B cell (primary cell): ENCODE measurements at regions of chr15 and their contacts with region 1.

Region 1: GRCh38 chr15:38389924-38390542 is 63.9 kb upstream of the FAM98B start:
- DNase-seq: peak; percentile 58
- ATAC-seq: peak; percentile 56
- H3K4me3 ChIP-seq: no peak overlapping the region
- H3K4me3 Mint-ChIP-seq: no peak overlapping the region
- H3K27ac ChIP-seq: no peak overlapping the region
- H3K27ac Mint-ChIP-seq: no peak overlapping the region
- H3K4me1 ChIP-seq: no peaks in the 10 kb centered on the region
- H3K4me1 Mint-ChIP-seq: no peaks in the 10 kb centered on the region
- H3K27me3 ChIP-seq: peaks cover 0 to 6% (median under 1%) of the 10 kb centered on the region in 4 experiments
- H3K27me3 Mint-ChIP-seq: peaks cover 23% of the 10 kb centered on the region
- CTCF ChIP-seq: peak; percentile 95

Region 2: DNA sequence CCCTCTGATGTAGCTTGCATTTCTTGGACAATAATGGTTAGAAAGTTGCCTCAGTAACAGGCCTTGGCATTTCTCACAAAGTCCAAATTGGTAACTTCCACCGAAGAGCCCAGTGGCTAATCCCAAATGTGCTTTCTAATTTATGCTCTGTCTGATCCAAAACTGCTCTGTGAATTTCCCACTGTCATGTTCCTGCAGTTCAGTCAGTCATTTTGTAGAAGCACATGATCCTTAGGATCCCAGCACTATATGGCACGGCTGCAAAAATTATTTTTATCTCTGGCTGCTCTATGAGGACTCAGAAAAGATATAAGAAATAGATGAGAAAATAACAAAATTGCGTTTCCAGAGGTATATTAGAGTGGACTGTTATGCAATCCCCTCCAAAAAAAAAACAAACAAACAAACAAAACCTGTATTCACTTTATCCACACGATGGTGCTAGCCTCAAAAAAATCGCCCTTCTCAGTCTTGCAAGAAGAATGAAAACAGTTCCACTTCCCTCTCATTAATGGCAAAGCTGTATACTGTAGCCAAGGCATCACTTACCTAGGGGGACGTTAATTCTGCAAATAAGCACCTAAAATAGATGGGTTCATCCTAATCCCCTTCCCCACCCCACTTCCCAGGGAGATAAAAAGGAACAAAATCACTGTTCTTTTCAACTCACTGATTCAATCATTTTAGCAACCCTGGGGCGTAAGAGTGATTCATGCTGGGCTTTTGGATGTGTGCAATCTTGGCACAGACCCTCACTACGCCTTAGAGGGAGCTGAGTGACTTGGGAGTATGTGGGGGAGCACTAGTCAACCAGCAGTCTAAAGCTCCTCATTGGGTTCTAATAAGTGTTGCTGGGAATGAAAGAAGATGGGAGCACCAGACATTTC is 394.3 kb before region 1 on chr15:
- CTCF ChIA-PET with region 1: interaction called, 33 read pairs
- POLR2A ChIA-PET with region 1: no interaction called
- intact Hi-C with region 1: loop called (anchors 1 kb)
- DNase-seq: peak; percentile 49
- ATAC-seq: no peak
- H3K4me3 ChIP-seq: no peak overlapping the region
- H3K4me3 Mint-ChIP-seq: no peak overlapping the region
- H3K27ac ChIP-seq: no peak overlapping the region
- H3K27ac Mint-ChIP-seq: no peak overlapping the region
- H3K4me1 ChIP-seq: no peaks in the 10 kb centered on the region
- H3K4me1 Mint-ChIP-seq: no peaks in the 10 kb centered on the region
- H3K27me3 ChIP-seq: no peaks in the 10 kb centered on the region
- H3K27me3 Mint-ChIP-seq: peaks cover 40% of the 10 kb centered on the region
- CTCF ChIP-seq: peak; percentile 65

Region 3: DNA sequence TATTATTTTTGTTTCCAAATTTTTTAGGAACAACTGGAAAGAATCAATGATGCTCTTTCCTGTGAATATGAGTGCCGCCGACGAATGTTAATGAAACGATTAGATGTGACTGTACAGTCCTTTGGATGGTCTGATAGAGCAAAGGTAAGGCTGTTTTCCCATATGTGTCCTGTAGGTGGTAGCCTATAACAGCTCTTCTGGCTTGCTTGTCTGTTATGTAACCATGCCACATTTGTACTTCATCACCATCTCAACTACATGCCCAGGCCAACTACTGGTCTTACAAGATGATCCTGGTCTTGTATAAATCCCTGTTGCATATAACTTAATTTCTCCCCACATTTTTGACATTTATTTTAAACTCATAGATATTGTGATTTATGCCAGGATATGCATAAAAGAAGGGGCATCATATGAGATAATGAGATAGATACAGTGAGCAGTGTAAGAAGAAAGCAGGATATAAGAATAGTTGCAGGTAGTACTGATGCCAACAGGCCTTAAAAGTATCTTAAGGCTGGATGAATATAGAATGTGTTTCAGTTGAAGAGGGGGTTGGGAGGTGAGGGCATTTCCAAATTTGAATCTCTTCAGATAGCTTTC is 84.2 kb after region 1 on chr15:
- CTCF ChIA-PET with region 1: no interaction called
- POLR2A ChIA-PET with region 1: no interaction called
- intact Hi-C with region 1: no loop called
- DNase-seq: peak; percentile 73
- ATAC-seq: peak; percentile 99
- H3K4me3 ChIP-seq: no peak overlapping the region
- H3K4me3 Mint-ChIP-seq: no peak overlapping the region
- H3K27ac ChIP-seq: no peak overlapping the region
- H3K27ac Mint-ChIP-seq: no peak overlapping the region
- H3K4me1 ChIP-seq: no peaks in the 10 kb centered on the region
- H3K4me1 Mint-ChIP-seq: peaks cover 2% of the 10 kb centered on the region
- H3K27me3 ChIP-seq: no peaks in the 10 kb centered on the region
- H3K27me3 Mint-ChIP-seq: no peaks in the 10 kb centered on the region
- CTCF ChIP-seq: peak; percentile 89